Activated CD4-positive, alpha-beta memory T cell treated with anti-CD3 and anti-CD28 coated beads, Interleukin-2, amount 10 ng/mL, durations not matched to agents 7 days and 5 days (primary cell): ENCODE measurements at regions of chr12 and their contacts with region 1.

Region 1: DNA sequence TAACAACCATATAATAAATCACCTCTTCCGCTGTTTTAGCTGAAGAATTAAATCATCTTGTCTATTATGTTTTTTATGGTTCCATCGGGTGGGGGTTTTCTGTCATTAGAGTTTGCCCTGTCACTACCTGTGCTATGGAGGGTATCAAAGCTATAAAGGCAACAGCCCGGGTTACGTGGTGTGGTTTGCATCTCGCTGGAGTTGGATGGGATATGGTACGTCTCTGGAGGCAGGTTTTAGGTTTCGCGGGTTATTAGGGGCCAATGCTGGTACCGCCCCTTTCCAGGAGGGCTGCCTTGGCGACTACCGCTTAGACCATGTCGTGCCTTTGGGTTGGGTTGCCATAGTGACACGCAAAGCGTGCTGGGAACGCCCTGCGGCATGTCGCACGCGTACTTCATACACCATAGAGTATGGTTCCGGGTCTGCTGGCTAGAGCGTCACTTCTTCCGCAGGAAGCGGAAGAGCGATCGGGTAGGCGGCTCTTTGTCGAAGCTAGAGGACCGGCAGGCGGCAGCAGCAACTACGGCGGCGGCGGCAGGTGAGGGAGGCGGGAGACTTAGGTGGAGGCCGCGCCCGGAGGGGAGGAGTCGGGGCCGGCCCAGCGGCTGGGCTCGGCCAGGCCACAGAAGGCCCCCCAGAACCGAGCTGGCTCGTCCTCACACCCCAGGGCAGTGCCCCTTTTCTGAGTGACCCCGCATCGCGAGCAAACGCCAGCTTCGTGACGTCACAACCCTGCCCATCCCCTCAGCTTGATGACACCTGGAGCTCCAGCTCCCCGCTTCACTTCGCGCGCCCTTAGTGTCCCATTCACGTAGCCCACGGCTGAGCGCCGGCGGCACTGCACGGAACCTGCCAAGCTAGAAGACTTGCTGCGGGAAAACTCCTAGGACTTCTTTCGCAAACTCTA is at the start of gene ZC3H10:
- DNase-seq: peak; percentile 99
- H3K4me3 Mint-ChIP-seq: peak within 1 kb of the TSS; percentile 99
- H3K27ac Mint-ChIP-seq: peak within 1 kb of the TSS; percentile 99
- H3K4me1 Mint-ChIP-seq: peaks cover 40% of the 10 kb centered on the region
- H3K27me3 Mint-ChIP-seq: no peaks in the 10 kb centered on the region
- total RNA-seq, gene ZC3H10: 8.0 to 10.3 TPM

Region 2: GRCh38 chr12:55670276-55670675 is 447.8 kb before region 1 on chr12:
- CTCF ChIA-PET with region 1: no interaction called
- POLR2A ChIA-PET with region 1: no interaction called
- DNase-seq: no peak
- H3K4me3 Mint-ChIP-seq: no peak overlapping the region
- H3K27ac Mint-ChIP-seq: no peak overlapping the region
- H3K4me1 Mint-ChIP-seq: peaks cover 2% of the 10 kb centered on the region
- H3K27me3 Mint-ChIP-seq: peaks cover 13% of the 10 kb centered on the region

Region 3: DNA sequence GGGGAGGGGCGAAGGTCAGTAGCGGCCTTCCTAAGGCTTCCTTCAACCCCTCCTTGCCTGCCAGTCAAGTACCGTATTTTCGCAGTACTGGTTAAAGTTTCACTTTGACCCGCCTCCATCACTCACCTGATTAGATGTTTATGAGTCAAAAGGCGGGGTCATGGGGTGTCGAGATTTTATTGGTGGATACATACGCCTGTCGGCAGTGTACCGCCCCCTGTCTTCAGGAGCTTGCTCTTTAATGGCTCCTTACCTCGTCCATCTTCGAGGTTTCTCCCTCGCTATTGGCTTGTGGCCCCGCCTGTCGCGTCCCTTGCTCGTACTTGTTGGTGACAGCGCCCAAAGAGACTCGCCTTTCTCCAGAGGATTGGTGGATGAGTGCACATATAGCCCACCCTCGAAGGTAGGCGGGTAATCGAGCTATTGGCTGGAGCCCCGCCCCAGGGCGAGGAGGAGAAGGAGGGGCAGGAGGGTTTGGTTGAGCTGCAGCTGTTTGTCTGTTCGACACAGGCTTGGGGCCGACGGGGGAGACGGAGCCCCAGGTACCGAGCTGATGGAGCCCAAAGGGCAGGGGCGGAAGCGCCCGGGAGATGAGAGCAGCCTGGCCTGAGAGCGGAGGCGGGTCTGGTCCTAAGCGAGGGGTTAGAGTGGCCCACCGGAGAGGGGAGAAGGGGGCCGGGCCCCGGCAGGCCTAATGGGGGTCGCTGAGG is 144.3 kb before region 1 on chr12 and contains the start of gene RAB5B:
- CTCF ChIA-PET with region 1: interaction called, 3 read pairs
- POLR2A ChIA-PET with region 1: interaction called, 18 read pairs
- DNase-seq: peak; percentile 99
- H3K4me3 Mint-ChIP-seq: no peak within 1 kb of the TSS
- H3K27ac Mint-ChIP-seq: no peak within 1 kb of the TSS
- H3K4me1 Mint-ChIP-seq: peaks cover 28% of the 10 kb centered on the region
- H3K27me3 Mint-ChIP-seq: no peaks in the 10 kb centered on the region
- total RNA-seq, gene RAB5B: 70.1 to 71.5 TPM

Region 4: GRCh38 chr12:56127888-56128669 is 10.0 kb after region 1 on chr12 and contains the start of gene ESYT1:
- CTCF ChIA-PET with region 1: interaction called, 66 read pairs
- POLR2A ChIA-PET with region 1: interaction called, 109 read pairs
- DNase-seq: peak; percentile 99
- H3K4me3 Mint-ChIP-seq: peak within 1 kb of the TSS; percentile 97
- H3K27ac Mint-ChIP-seq: peak within 1 kb of the TSS; percentile 94
- H3K4me1 Mint-ChIP-seq: peaks cover 75% of the 10 kb centered on the region
- H3K27me3 Mint-ChIP-seq: no peaks in the 10 kb centered on the region
- total RNA-seq, gene ESYT1: 266 to 279 TPM

Region 5: GRCh38 chr12:56224102-56224701 is 106.2 kb after region 1 on chr12 and contains the start of gene NABP2:
- CTCF ChIA-PET with region 1: interaction called, 44 read pairs
- POLR2A ChIA-PET with region 1: interaction called, 31 read pairs
- DNase-seq: peak; percentile 95
- H3K4me3 Mint-ChIP-seq: peak within 1 kb of the TSS; percentile 89
- H3K27ac Mint-ChIP-seq: peak within 1 kb of the TSS; percentile 76
- H3K4me1 Mint-ChIP-seq: peaks cover 53% of the 10 kb centered on the region
- H3K27me3 Mint-ChIP-seq: no peaks in the 10 kb centered on the region
- total RNA-seq, gene NABP2: 49.6 to 52.3 TPM

Region 6: DNA sequence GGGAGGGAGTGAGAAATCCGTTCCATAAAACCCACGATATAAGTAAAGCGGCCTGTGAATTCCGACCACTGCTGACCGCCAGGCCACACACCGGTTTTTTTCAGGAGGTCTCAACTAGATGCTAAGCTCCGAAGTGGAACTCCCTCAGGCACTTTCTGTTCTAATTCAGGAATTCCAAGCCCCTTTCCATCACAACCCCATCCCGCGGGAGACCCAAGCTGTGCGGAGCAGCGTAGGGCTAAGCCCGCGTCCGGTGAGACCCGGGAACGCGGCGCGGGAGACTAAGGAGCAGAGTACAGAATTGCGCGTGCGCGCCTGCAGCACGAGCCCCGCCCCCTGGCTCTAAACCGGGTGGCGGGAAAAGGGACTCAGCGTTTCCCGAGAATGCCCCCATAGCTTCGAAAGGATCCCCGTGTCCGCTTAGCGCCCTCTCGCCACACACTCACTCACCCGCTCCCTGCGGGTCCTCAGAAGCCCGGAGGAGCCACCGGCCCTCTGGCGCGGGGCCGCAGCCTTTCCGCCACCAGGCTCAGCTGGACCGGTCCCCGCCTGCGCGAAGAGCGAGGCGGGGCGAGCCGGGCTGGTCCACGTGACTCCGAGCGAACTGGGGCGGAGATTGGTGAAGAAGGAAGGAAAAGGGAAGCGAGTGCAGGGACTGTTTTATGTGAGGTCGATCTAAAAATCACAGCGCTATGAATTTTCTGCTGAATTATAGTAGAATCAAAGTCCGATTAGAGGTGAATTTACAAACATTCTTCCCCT is 331.0 kb after region 1 on chr12 and contains the start of gene TIMELESS:
- CTCF ChIA-PET with region 1: no interaction called
- POLR2A ChIA-PET with region 1: interaction called, 10 read pairs
- DNase-seq: peak; percentile 87
- H3K4me3 Mint-ChIP-seq: peak within 1 kb of the TSS; percentile 89
- H3K27ac Mint-ChIP-seq: peak within 1 kb of the TSS; percentile 81
- H3K4me1 Mint-ChIP-seq: peaks cover 36% of the 10 kb centered on the region
- H3K27me3 Mint-ChIP-seq: peaks cover 4% of the 10 kb centered on the region
- total RNA-seq, gene TIMELESS: 44.1 to 45.6 TPM